ENCODE measurements at regions of chr11 and their contacts with region 1.

Region 1: GRCh38 chr11:81707881-81708280 is 1025.8 kb downstream of the FAM181B start:
- DNase-seq: no peak
- H3K4me3 ChIP-seq: no peak overlapping the region
- H3K4me3 Mint-ChIP-seq: no peak overlapping the region
- H3K27ac Mint-ChIP-seq: no peak overlapping the region
- H3K4me1 ChIP-seq: no peaks in the 10 kb centered on the region
- H3K4me1 Mint-ChIP-seq: no peaks in the 10 kb centered on the region
- H3K27me3 ChIP-seq: no peaks in the 10 kb centered on the region
- H3K27me3 Mint-ChIP-seq: peaks cover 2% of the 10 kb centered on the region
- CTCF ChIP-seq: peak; percentile 15 to 55

Region 2: DNA sequence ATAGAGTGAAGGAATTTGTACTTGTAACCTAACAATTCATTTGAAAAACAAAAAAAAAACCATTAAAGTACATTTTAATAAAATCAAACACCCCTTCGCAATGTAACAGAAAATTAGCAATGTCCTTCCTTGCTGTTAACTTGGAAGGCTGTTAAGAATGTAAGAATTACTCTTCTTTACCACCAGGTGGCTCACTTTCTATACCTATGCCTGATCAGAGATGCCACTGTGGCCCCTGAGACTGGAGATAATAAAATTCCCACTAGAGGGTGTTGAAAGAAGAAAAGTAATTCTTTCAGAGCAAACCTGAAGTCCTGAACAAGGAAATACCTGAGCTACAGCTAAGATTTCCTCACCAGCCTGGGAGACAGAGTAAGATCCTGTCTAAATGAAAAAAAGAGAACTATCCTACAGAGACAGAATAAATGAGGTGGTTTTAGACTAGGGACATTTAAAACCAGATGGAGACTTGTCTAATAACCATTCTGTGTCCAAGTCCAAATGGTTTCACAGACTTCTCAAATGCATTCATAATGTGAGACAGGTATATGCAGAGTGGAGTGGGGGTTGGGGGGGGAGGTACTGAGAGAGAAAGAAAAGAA is 63.5 kb before region 1 on chr11:
- CTCF ChIA-PET with region 1: no interaction called
- POLR2A ChIA-PET with region 1: no interaction called
- intact Hi-C with region 1: loop called (anchors 5 kb)
- DNase-seq: peak; percentile 61 to 65
- H3K4me3 ChIP-seq: no peak overlapping the region
- H3K4me3 Mint-ChIP-seq: no peak overlapping the region
- H3K27ac Mint-ChIP-seq: no peak overlapping the region
- H3K4me1 ChIP-seq: no peaks in the 10 kb centered on the region
- H3K4me1 Mint-ChIP-seq: peaks cover 6% of the 10 kb centered on the region
- H3K27me3 ChIP-seq: 0 out of 2 replicates have a peak, but pooled peaks cover 1% of the 10 kb centered on the region
- H3K27me3 Mint-ChIP-seq: peaks cover 16% of the 10 kb centered on the region
- CTCF ChIP-seq: peak; percentile 88 to 94

Measured in Caco-2 (cell line).